Lower lobe of right lung (tissue), 2 donors: ENCODE measurements at regions of chr3 and their contacts with region 1.

Region 1: DNA sequence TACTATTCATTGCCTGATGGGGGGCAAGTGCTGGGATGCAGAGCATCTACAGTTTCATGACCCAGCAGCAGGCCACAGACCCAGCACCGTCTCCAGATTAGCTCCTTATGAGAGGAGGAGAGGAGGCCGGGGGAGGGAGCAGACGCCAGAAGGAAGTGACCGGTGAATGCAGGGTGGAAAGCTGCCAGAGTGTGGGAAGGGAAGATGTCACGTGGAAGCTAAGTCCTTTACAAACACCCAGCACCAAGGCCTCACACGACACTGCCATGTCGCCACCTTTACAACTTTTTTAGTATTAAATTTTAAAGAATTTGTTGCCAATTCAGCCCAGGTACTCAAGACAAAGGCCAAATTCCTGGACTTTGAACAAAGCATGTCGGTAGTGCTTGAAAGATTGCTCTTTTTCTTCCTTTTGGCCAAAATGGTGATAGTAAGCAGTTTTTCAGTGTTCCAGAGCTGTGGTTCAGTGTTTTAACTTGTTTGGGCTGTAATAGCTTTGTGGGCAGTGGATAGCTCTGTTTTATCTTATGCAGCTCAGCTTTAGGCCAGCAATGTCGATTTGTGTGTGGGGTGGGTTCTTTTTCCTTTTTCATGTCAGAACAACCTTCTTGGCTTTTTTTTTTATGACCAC is 58.2 kb downstream of the ZBTB38 start:
- DNase-seq: peak; percentile 90
- ATAC-seq: peak; percentile 89 to 90
- H3K4me3 ChIP-seq: peak overlapping the region; percentile 7
- H3K27ac ChIP-seq: peak overlapping the region; percentile 79
- H3K4me1 ChIP-seq: peaks cover 65% of the 10 kb centered on the region
- H3K27me3 ChIP-seq: no peaks in the 10 kb centered on the region
- CTCF ChIP-seq: no peak

Region 2: GRCh38 chr3:141360888-141361598 is 65.5 kb before region 1 on chr3:
- intact Hi-C with region 1: loop called (anchors 10 kb)
- DNase-seq: no peak
- ATAC-seq: peak; percentile 92 to 97
- H3K4me3 ChIP-seq: peak overlapping the region; percentile 20
- H3K27ac ChIP-seq: peak overlapping the region; percentile 37
- H3K4me1 ChIP-seq: peaks cover 15% of the 10 kb centered on the region
- H3K27me3 ChIP-seq: no peaks in the 10 kb centered on the region
- CTCF ChIP-seq: peak; percentile 86